BJ (cell line): ENCODE measurements at regions of chr19 and their contacts with region 1.

Region 1: GRCh38 chr19:43595999-43596841 is at the starts of genes IRGQ and ZNF576:
- DNase-seq: peak; percentile 97
- H3K4me3 ChIP-seq: peak within 1 kb of the TSS; percentile 64
- H3K27me3 ChIP-seq: no peaks in the 10 kb centered on the region
- CTCF ChIP-seq: peak; percentile 16; the same call in 1 of the 2 replicates
- polyA plus RNA-seq, gene IRGQ: 5.4 and 7.0 TPM in 2 replicates
- polyA plus RNA-seq, gene ZNF576: 9.0 and 14.8 TPM in 2 replicates

Region 2: GRCh38 chr19:43372462-43372861 is 223.8 kb before region 1 on chr19:
- CTCF ChIA-PET with region 1: no interaction called
- POLR2A ChIA-PET with region 1: no interaction called
- DNase-seq: no peak
- H3K4me3 ChIP-seq: no peak overlapping the region
- H3K27me3 ChIP-seq: 0 out of 2 replicates have a peak, but pooled peaks cover 2% of the 10 kb centered on the region
- CTCF ChIP-seq: no peak

Region 3: DNA sequence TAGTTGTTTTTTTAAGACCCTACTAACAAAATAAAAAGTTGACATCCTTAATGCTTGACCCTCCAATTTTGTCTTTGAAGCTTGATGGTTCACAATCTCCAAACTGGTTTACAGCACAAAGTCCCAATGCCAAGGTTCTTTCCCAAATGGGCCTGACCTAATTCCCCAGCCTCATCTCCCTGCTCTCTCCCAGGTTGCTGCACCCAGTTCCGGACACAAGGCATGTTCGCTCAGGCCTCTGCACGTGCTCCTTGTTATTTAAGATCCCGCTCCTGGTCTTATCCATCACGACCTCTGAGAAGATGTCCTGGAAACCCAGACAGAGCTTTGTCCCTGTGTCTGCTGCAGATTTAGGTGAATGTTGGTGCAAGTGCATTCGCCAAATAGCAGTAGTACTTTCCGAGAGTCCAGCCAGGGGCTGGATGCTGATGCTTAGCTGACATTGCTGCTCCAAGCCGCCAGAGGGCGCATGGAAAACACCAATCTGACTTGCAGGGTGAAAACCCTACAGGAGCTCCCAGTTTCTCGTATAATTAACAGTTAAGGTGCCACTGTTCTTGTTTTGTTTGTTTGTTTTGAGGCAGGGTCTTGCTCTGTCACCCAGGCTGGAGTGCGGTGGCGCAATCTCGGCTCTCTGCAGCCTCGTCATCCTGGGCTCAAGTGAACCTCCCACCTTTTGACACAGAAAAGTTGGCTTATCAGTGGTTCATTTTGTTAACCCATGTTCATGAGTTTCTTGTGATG is 149.3 kb before region 1 on chr19:
- CTCF ChIA-PET with region 1: interaction called, 12 read pairs
- POLR2A ChIA-PET with region 1: no interaction called
- DNase-seq: no peak
- H3K4me3 ChIP-seq: no peak overlapping the region
- H3K27me3 ChIP-seq: no peaks in the 10 kb centered on the region; the same call in 1 of the 2 replicates
- CTCF ChIP-seq: peak; percentile 94

Region 4: DNA sequence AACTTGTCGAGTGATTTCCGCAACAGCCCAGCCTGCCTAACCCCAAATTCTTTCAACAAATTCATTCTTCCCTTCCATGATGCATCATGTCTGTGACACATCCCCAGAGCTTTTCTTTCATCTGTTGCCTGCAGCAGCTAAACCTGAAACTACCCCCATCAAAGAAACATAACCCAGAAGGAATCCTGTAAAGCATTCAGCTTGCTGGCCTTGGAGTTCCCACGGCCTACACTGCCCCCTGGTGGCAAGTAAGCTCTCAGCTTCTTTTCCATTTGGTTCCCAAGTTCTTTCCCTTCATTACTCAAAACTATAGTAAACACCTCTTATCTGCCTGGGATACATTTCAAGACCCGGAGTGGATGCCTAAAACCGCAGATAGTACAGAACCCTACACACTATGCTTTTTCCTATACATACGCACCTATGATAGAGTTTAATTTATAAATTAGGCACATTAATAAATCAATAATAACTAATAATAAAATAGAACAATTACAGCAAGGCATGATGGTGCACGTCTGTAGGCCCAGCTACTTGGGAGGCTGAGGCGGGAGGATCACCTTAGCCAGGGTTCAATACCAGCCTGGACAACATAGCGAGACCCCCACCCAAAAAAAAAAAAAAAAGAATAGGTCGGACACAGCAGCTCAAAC is 76.7 kb before region 1 on chr19:
- CTCF ChIA-PET with region 1: interaction called, 10 read pairs
- POLR2A ChIA-PET with region 1: no interaction called
- DNase-seq: no peak
- H3K4me3 ChIP-seq: no peak overlapping the region
- H3K27me3 ChIP-seq: no peaks in the 10 kb centered on the region
- CTCF ChIP-seq: peak; percentile 89

Region 5: GRCh38 chr19:43532962-43533545 is 63.2 kb before region 1 on chr19 and contains the start of gene ZNF575:
- CTCF ChIA-PET with region 1: interaction called, 43 read pairs
- POLR2A ChIA-PET with region 1: interaction called, 3 read pairs
- DNase-seq: peak; percentile 79
- H3K4me3 ChIP-seq: peak within 1 kb of the TSS; percentile 57
- H3K27me3 ChIP-seq: no peaks in the 10 kb centered on the region
- CTCF ChIP-seq: no peak
- polyA plus RNA-seq, gene ZNF575: 0.09 and 0.33 TPM in 2 replicates

Region 6: GRCh38 chr19:43555185-43555770 is 40.9 kb before region 1 on chr19:
- CTCF ChIA-PET with region 1: interaction called, 36 read pairs
- POLR2A ChIA-PET with region 1: no interaction called
- DNase-seq: no peak
- H3K4me3 ChIP-seq: no peak overlapping the region
- H3K27me3 ChIP-seq: no peaks in the 10 kb centered on the region
- CTCF ChIP-seq: peak; percentile 92

Region 7: GRCh38 chr19:43575156-43575950 is 20.9 kb before region 1 on chr19 and contains the starts of genes PINLYP and XRCC1:
- CTCF ChIA-PET with region 1: interaction called, 19 read pairs
- POLR2A ChIA-PET with region 1: no interaction called
- DNase-seq: peak; percentile 92
- H3K4me3 ChIP-seq: peak within 1 kb of the TSS; percentile 99
- H3K27me3 ChIP-seq: no peaks in the 10 kb centered on the region
- CTCF ChIP-seq: no peak
- polyA plus RNA-seq, gene PINLYP: 2.0 and 2.2 TPM in 2 replicates
- polyA plus RNA-seq, gene XRCC1: 22.8 and 30.8 TPM in 2 replicates

Region 8: GRCh38 chr19:43584484-43584883 is 11.7 kb before region 1 on chr19:
- CTCF ChIA-PET with region 1: interaction called, 25 read pairs
- POLR2A ChIA-PET with region 1: no interaction called
- DNase-seq: no peak
- H3K4me3 ChIP-seq: no peak overlapping the region
- H3K27me3 ChIP-seq: no peaks in the 10 kb centered on the region
- CTCF ChIP-seq: no peak